ENCODE measurements at regions of chr5 and their contacts with region 1.

Region 1: GRCh38 chr5:39376293-39376714 is 12.0 kb upstream of the C9 start:
- DNase-seq: no peak
- ATAC-seq: no peak
- H3K4me3 ChIP-seq: no peak overlapping the region
- H3K27ac ChIP-seq: no peak overlapping the region
- H3K4me1 ChIP-seq: no peaks in the 10 kb centered on the region
- H3K27me3 ChIP-seq: no peaks in the 10 kb centered on the region

Region 2: DNA sequence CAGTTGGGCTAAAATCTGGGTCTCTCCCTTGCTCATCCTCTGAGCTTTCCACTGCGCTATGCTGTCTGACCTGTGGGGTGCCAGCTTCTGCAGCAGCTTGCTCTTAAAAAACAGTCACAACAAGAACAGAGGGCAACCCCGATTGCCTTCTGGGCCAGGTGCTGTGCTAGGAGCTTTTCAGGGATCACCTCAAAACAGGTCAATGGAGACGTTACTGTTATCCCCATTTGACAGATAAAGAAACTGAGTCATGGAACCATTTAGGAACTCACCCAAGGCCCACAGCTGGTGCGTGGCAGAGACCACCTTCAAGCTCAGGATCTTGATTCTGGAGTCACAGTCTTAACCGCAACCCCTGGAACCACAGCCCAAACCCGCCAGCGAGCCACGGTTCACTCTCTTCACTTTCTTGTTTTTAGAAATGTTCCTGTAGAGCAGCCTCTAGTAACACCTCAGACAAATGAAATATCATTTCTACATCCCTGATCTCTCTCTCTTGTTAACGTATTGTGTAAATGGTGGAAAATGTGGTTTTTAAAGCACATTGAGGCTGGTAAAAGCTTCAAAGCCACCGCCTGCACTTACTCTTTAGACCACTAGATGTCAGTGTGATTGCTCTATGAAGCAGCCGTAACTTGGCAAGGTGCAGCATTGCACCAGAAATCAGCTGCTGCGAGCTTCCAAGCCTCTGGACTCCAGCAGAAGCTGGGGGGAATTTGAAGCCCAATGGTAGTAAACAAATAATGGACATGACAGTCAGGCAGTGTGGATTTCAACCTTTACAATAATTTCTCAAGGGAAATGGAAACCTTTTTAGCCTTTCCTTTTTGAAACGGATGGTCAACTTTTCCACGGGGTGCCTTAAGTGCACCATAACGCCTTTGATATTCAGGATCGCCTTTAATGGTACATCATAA is 158.7 kb before region 1 on chr5:
- intact Hi-C with region 1: loop called in 1 of 2 experiments (anchors 5 kb)
- DNase-seq: peak; percentile 79 to 81
- ATAC-seq: peak; percentile 91
- H3K4me3 ChIP-seq: no peak overlapping the region
- H3K27ac ChIP-seq: no peak overlapping the region
- H3K4me1 ChIP-seq: no peaks in the 10 kb centered on the region
- H3K27me3 ChIP-seq: no peaks in the 10 kb centered on the region

Region 3: GRCh38 chr5:39424736-39425637 is 48.7 kb after region 1 on chr5 and contains the start of gene DAB2:
- intact Hi-C with region 1: loop called in 1 of 2 experiments (anchors 5 kb)
- DNase-seq: peak; percentile 92 to 95
- ATAC-seq: peak; percentile 89
- H3K4me3 ChIP-seq: peak within 1 kb of the TSS; percentile 83 to 97
- H3K27ac ChIP-seq: peak within 1 kb of the TSS; percentile 55 to 57
- H3K4me1 ChIP-seq: peaks cover 5 to 7% of the 10 kb centered on the region in 2 donors
- H3K27me3 ChIP-seq: no peaks in the 10 kb centered on the region
- total RNA-seq, gene DAB2: 119 to 255 TPM

Region 4: GRCh38 chr5:39547553-39548154 is 171.3 kb after region 1 on chr5:
- intact Hi-C with region 1: loop called (anchors 1 to 2 kb)
- DNase-seq: no peak
- ATAC-seq: peak; percentile 76
- H3K4me3 ChIP-seq: no peak overlapping the region
- H3K27ac ChIP-seq: no peak overlapping the region
- H3K4me1 ChIP-seq: no peaks in the 10 kb centered on the region
- H3K27me3 ChIP-seq: no peaks in the 10 kb centered on the region

Region 5: DNA sequence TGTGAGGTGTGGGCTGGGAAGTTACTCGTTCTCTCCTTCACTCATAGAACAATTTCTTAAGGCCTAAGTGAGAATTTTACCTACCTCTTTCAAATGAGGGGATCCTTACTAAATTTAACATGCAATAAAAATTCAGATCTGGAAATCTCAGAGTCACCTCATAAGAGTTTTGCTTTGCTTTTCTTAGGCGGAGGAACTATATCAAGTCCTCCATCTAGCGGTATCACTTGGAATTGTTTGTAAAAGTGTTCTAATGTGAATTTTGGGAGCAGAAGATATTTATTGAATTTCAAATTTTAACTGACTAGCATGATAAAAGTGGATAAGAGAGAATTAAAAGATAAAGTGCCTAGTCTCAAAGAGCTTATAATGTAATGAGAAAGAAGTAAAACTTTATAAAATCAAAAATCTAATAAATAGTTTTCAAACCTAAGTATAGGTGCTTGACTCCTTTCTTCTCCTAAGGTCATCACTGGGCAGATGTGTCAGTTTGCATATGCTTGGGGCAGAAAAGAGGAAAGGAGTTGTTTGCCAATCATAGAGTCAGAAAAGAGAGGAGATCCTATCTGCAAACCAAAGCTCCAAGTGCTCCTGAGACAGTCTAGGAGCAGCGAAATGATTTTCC is 194.2 kb after region 1 on chr5:
- intact Hi-C with region 1: loop called (anchors 5 kb)
- DNase-seq: no peak
- ATAC-seq: no peak
- H3K4me3 ChIP-seq: no peak overlapping the region
- H3K27ac ChIP-seq: no peak overlapping the region
- H3K4me1 ChIP-seq: no peaks in the 10 kb centered on the region
- H3K27me3 ChIP-seq: no peaks in the 10 kb centered on the region